HEK293T (cell line): ENCODE measurements at regions of chr4 and their contacts with region 1.

Region 1: DNA sequence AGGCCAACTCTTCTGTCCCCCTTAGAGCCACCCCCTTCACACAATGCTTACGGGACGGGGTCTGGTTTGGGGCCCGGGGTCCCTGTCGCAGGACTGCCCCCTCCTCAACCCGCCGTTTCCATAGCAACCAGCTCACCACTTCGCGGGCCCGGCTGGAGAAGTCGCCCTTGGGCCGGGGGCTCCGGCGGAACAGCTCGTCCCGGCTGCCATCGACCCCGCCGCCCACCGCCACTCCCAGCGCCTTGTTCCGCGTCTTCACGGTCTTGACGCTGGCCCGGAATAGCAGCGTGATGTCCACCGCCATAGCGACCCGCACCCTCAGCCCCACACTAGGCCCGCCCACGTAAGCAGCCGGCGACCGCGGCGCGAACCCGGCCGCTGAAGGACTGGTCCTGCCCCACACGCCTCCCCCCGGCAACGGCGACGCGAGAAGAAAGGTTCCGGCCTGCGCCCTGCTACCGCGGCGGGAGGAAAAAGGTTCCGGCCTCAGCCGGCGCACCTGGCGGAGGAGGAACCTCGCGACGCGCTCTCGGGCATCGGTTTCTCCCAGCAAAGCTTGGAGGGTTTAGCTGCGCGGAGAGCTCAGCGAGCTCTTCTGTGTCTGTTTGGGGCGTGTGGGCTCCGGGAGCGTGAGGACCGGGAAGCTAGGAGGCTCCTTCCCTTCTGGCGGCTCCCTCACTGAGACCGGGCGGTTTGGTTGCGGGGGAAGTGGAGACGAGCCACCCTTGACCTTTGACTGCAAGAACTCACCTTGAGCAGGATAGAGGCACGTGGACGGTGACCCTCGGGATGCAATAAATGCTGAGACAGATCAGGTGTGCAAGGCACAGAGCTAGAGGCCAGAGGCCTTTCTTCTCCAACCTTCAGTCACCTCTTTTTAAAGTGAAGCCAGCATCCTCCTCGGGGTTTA is at the start of gene STX18:
- DNase-seq: peak; percentile 87

Region 2: DNA sequence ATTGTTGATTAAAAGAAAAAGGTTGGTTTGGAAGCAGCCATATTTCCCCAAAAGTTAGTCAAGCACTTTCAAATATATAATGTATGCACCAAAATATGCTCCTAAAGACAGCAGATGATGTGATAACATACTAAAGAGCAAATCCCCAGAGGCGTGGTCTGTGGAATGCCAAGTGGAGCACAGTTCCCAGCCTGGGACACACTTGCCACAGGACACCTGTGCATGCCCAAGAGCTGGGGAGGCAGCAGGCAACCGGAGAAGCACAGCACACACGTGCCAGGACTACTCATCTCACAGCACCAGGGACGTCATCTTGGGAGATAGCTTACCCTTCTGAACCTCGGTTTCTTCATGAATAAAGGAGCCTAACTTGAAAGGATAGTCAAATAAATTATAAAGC is 12.5 kb before region 1 on chr4:
- CTCF ChIA-PET with region 1: no interaction called
- POLR2A ChIA-PET with region 1: interaction called, 10 read pairs
- DNase-seq: no peak

Region 3: GRCh38 chr4:4555916-4556315 is 14.0 kb after region 1 on chr4:
- CTCF ChIA-PET with region 1: no interaction called
- POLR2A ChIA-PET with region 1: interaction called, 14 read pairs
- DNase-seq: no peak

Region 4: GRCh38 chr4:4585012-4585670 is 43.2 kb after region 1 on chr4:
- CTCF ChIA-PET with region 1: no interaction called
- POLR2A ChIA-PET with region 1: no interaction called
- DNase-seq: no peak